MCF 10A (cell line): ENCODE measurements at regions of chr15 and their contacts with region 1.

Region 1: GRCh38 chr15:34084086-34084485 is 17.6 kb downstream of the EMC7 start:
- DNase-seq: peak; percentile 88
- H3K4me3 Mint-ChIP-seq: no peak overlapping the region
- H3K27ac Mint-ChIP-seq: peak overlapping the region; percentile 24
- H3K4me1 Mint-ChIP-seq: peaks cover 6% of the 10 kb centered on the region
- H3K27me3 Mint-ChIP-seq: no peaks in the 10 kb centered on the region
- CTCF ChIP-seq: no peak

Region 2: DNA sequence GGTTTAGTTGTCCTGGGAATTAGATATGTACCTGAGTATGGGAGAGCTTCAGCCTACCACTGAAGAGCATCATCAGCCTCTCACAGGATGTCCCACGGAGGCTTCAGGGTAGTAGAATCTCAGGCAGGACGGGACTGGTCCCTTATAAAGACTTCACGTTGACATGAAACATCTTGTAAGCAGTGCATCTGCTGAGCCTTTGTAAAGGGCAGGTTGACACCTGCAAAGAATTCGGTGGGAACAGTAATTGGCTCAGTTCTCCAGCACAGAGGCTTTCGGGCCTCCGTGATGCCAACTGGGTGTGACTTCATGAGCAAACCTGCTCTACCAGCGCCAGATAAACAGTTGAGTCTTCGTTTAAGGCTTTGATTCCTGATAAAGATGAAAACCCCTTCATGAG is 18.1 kb before region 1 on chr15:
- CTCF ChIA-PET with region 1: interaction called, 10 read pairs
- POLR2A ChIA-PET with region 1: interaction called, 12 read pairs
- intact Hi-C with region 1: no loop called
- DNase-seq: peak; percentile 11
- H3K4me3 Mint-ChIP-seq: no peak overlapping the region
- H3K27ac Mint-ChIP-seq: no peak overlapping the region
- H3K4me1 Mint-ChIP-seq: peaks cover 6% of the 10 kb centered on the region
- H3K27me3 Mint-ChIP-seq: no peaks in the 10 kb centered on the region
- CTCF ChIP-seq: no peak

Region 3: GRCh38 chr15:34101366-34102175 is 17.5 kb after region 1 on chr15 and contains the starts of genes EMC7 and PGBD4:
- CTCF ChIA-PET with region 1: interaction called, 4 read pairs
- POLR2A ChIA-PET with region 1: interaction called, 19 read pairs
- intact Hi-C with region 1: no loop called
- DNase-seq: peak; percentile 99
- H3K4me3 Mint-ChIP-seq: peak within 1 kb of the TSS; percentile 98
- H3K27ac Mint-ChIP-seq: peak within 1 kb of the TSS; percentile 99
- H3K4me1 Mint-ChIP-seq: peaks cover 5% of the 10 kb centered on the region
- H3K27me3 Mint-ChIP-seq: no peaks in the 10 kb centered on the region
- CTCF ChIP-seq: no peak
- total RNA-seq, gene EMC7: 98.2 and 134 TPM in 2 replicates
- total RNA-seq, gene PGBD4: 2.4 and 2.6 TPM in 2 replicates